Esophagus muscularis mucosa (tissue), 4 donors: ENCODE measurements at regions of chr1 and their contacts with region 1.

Region 1: GRCh38 chr1:26111530-26112406 is at the start of gene PDIK1L:
- DNase-seq: peak; percentile 97
- H3K4me3 ChIP-seq: peak within 1 kb of the TSS; percentile 95 to 100 (median 98)
- H3K27ac ChIP-seq: peak within 1 kb of the TSS; percentile 92 to 97 (median 94)
- H3K4me1 ChIP-seq: peaks cover 25 to 35% (median 27%) of the 10 kb centered on the region in 4 donors
- H3K27me3 ChIP-seq: no peaks in the 10 kb centered on the region
- CTCF ChIP-seq: no peak
- EP300 ChIP-seq: no peak
- POLR2A ChIP-seq: no peak
- total RNA-seq, gene PDIK1L: 5.1 to 6.4 (median 5.7) TPM

Region 2: GRCh38 chr1:26035959-26036755 is 75.6 kb before region 1 on chr1:
- intact Hi-C with region 1: loop called (anchors 5 kb)
- DNase-seq: peak; percentile 95
- H3K4me3 ChIP-seq: peak overlapping the region; percentile 75 to 84 (median 82)
- H3K27ac ChIP-seq: peak overlapping the region; percentile 87 to 91 (median 90)
- H3K4me1 ChIP-seq: peaks cover 16 to 26% (median 19%) of the 10 kb centered on the region in 4 donors
- H3K27me3 ChIP-seq: peaks cover 0 to 30% (median 0%) of the 10 kb centered on the region in 4 donors
- CTCF ChIP-seq: peak in 2 of 3 experiments; percentile 99
- EP300 ChIP-seq: no peak
- POLR2A ChIP-seq: no peak

Region 3: DNA sequence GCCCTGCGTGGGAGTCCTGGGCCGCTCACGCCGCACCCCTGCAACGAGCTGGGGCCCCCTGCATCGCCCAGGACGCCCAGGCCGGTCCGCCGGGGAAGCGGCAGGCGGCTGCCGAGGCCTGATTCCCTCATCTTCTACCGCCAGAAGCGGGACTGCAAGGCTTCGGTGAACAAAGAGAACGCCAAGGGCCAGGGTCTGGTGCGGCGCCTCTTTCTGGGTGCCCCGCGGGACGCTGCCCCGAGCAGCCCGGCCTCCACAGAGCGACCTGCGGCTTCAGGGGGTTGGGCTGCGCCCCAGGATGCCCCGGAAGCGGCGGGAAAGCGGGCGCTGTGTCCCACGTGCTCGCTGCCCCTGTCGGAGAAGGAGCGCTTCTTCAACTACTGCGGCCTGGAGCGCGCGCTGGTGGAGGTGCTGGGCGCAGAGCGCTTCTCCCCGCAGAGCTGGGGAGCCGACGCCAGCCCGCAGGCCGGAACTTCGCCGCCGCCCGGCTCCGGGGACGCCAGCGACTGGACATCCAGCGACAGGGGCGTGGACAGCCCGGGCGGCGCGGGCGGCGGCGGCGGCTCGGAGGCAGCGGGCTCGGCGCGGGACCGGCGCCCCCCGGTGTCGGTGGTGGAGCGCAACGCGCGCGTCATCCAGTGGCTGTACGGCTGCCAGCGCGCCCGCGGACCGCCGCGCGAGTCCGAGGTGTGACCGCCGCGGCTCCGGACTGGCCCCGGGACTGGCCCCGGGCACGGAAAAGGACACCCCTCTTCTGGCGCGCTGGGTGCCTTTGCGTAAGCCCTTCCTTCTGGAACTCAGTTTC is 49.8 kb after region 1 on chr1:
- intact Hi-C with region 1: loop called (anchors 5 kb)
- DNase-seq: no peak
- H3K4me3 ChIP-seq: peak overlapping the region; percentile 54 to 66 (median 63)
- H3K27ac ChIP-seq: peak overlapping the region; percentile 58 to 71 (median 67)
- H3K4me1 ChIP-seq: peaks cover 29 to 60% (median 33%) of the 10 kb centered on the region in 4 donors
- H3K27me3 ChIP-seq: peaks cover 0 to 22% (median 4%) of the 10 kb centered on the region in 4 donors
- CTCF ChIP-seq: peak in 2 of 3 experiments; percentile 22 to 29
- EP300 ChIP-seq: no peak
- POLR2A ChIP-seq: no peak

Region 4: DNA sequence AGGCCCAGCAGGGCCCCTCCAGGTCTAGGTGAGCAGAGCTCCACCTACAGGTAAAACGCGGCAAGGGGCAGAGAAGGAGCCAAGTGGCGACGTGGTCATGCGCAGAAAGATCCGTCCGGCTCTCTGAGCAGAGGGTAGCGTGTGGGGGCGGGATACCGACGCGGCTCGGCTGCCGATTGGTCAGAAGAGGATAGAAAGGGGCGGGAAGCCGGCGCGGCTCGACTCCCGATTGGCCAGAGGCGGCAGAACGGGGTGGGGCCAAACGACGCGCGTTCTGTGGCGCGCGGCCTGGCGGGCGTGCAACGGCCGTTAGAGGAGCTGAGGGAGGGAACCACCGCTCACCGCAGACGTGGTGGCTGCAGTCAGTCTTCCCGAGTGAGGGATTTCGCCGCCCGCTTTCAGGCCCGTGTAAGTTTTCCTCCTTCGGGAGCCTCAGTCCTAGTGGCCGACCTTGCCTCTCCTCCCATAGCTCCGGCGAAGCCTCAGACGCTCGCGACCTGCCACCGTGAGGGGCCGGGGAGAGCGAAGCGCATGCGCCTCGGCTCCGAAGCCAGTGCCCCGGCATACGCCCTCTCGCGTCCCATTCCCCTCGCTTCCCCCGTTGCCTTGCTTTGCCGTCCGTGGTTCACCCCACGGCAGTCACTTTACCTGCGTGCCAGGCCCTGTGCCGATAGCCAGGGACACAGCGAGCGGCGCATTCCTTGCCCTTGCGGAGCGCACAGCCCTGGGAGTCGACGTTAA is 122.3 kb after region 1 on chr1 and contains the start of gene CEP85:
- intact Hi-C with region 1: loop called (anchors 5 kb)
- DNase-seq: peak; percentile 99
- H3K4me3 ChIP-seq: peak within 1 kb of the TSS; percentile 69 to 73 (median 72)
- H3K27ac ChIP-seq: peak within 1 kb of the TSS; percentile 86 to 93 (median 92)
- H3K4me1 ChIP-seq: peaks cover 0 to 22% (median 17%) of the 10 kb centered on the region in 4 donors
- H3K27me3 ChIP-seq: no peaks in the 10 kb centered on the region
- CTCF ChIP-seq: peak; percentile 74 to 91 (median 85)
- EP300 ChIP-seq: no peak
- POLR2A ChIP-seq: no peak
- total RNA-seq, gene CEP85: 3.0 to 6.3 (median 4.8) TPM